ENCODE measurements at regions of chr1 and their contacts with region 1.

Region 1: DNA sequence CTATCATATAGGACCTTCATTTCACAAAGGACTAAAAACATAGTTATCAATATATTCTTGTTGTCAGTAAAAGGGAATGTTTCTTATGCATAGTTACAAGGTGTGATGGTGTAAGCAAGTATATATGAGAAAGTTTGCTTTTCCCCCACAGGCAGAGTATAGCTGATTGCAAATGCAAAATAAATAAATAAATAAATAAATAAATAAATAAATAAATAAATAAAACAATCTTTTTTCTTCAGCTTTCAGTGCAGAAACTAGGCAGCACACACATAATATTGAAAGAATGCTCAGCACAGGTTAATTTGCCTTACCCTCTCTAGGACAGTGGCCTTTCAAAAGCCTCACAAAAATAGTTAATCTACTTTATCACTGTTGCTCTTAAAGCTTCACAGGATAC is 138.8 kb downstream of the BRINP3 start:
- DNase-seq: no peak
- ATAC-seq: no peak
- H3K4me3 ChIP-seq: no peak overlapping the region
- H3K27ac ChIP-seq: no peak overlapping the region
- H3K4me1 ChIP-seq: no peaks in the 10 kb centered on the region
- H3K27me3 ChIP-seq: no peaks in the 10 kb centered on the region
- CTCF ChIP-seq: no peak
- POLR2A ChIP-seq: no peak

Region 2: DNA sequence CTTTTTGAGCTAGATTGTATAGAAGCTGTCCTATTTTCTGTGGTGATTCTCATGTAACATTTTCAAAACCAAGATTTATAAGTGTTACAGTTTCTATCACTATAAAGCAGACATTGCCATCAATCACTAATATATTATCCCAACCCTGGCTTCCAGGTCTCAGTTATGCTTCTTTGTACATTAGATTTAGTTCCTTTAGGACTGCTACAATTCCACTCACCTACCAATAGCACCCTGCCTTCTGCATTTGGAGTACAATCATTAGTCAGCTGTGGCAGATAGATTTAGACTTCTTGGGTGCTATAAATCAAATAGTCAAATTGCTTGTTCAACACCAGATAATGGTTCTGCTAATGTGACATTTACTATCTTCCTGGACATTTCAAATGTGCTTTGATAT is 142.8 kb before region 1 on chr1:
- in situ Hi-C with region 1: no loop called
- intact Hi-C with region 1: no loop called
- DNase-seq: no peak
- ATAC-seq: no peak
- H3K4me3 ChIP-seq: no peak overlapping the region
- H3K27ac ChIP-seq: no peak overlapping the region
- H3K4me1 ChIP-seq: no peaks in the 10 kb centered on the region
- H3K27me3 ChIP-seq: no peaks in the 10 kb centered on the region
- CTCF ChIP-seq: no peak
- POLR2A ChIP-seq: no peak

Region 3: DNA sequence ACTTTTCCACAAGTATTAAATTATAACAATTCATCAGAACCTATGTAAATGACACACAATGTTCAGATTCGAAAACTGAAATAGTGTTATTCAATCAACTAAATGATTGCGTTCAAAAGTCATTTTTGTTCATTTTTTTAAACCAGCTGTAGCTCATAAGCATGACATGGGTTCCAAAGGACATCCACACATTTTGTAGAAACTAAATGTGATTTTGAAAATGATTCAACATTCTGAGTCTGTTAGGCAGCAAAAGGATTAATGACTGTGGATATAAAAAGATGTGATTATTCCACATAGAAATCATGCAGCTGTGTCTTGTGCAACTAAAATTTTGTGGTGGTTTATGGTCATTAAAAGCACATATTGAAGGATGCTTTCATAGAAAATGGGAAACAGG is 65.7 kb before region 1 on chr1:
- in situ Hi-C with region 1: loop called in 1 of 4 experiments (anchors 10 kb)
- intact Hi-C with region 1: no loop called
- DNase-seq: no peak
- ATAC-seq: no peak
- H3K4me3 ChIP-seq: no peak overlapping the region
- H3K27ac ChIP-seq: no peak overlapping the region
- H3K4me1 ChIP-seq: no peaks in the 10 kb centered on the region
- H3K27me3 ChIP-seq: no peaks in the 10 kb centered on the region
- CTCF ChIP-seq: no peak
- POLR2A ChIP-seq: no peak

Region 4: DNA sequence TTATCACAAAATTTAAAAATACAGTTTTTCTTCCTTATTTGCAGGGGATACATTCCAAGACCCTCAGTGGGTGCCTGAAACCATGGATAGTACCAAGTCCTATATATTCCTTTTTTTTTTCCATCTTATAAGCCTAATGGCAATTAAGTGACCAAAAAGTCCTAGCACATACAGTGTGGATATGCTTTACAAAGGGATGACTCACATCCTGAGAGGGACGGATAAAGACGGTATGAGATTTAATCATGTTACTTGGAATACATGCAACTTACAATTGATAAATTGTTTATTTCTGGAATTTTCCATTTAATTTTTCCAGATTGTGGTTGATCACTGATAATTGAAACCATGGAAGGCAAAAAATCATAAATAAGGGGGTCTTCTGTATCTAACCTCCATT is 320.1 kb after region 1 on chr1:
- in situ Hi-C with region 1: no loop called
- intact Hi-C with region 1: no loop called
- DNase-seq: no peak
- ATAC-seq: no peak
- H3K4me3 ChIP-seq: no peak overlapping the region
- H3K27ac ChIP-seq: no peak overlapping the region
- H3K4me1 ChIP-seq: no peaks in the 10 kb centered on the region
- H3K27me3 ChIP-seq: no peaks in the 10 kb centered on the region
- CTCF ChIP-seq: no peak
- POLR2A ChIP-seq: no peak

Measured in gastrocnemius medialis (tissue), 4 donors.